CD8-positive, alpha-beta memory T cell (primary cell): ENCODE measurements at regions of chr10 and their contacts with region 1.

Region 1: DNA sequence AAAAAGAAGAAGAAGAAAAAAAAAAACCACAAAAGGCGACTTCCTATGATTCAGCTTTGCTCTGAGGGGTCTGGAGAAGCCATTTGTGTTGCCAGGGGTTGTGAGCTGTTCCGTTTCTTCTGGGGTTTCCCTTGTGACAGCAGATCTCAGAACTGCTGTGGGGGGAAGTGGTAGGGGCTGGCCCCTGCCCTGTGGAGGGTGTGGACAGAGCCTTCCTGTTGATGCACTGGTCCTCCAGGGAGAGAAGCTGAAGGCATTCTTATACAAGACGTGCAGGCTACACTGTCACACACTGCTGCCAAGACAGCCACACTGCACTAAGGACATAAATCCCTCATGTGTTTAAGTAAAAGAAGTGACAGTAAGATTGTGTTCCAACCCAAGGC is 17.3 kb upstream of the CSGALNACT2 start:
- DNase-seq: peak in 4 of 5 donors; percentile 14 to 71 (median 38)
- H3K4me3 ChIP-seq: peak overlapping the region; percentile 24
- H3K4me3 Mint-ChIP-seq: peak overlapping the region in 5 of 7 donors; percentile 45 to 75 (median 70)
- H3K27ac ChIP-seq: no peak overlapping the region
- H3K27ac Mint-ChIP-seq: peak overlapping the region in 7 of 8 donors; percentile 70 to 95 (median 90)
- H3K4me1 ChIP-seq: peaks cover 18% of the 10 kb centered on the region
- H3K4me1 Mint-ChIP-seq: peaks cover 23 to 26% (median 24%) of the 10 kb centered on the region in 3 donors
- H3K27me3 ChIP-seq: no peaks in the 10 kb centered on the region
- H3K27me3 Mint-ChIP-seq: peaks cover 0 to 2% of the 10 kb centered on the region in 2 donors

Region 2: DNA sequence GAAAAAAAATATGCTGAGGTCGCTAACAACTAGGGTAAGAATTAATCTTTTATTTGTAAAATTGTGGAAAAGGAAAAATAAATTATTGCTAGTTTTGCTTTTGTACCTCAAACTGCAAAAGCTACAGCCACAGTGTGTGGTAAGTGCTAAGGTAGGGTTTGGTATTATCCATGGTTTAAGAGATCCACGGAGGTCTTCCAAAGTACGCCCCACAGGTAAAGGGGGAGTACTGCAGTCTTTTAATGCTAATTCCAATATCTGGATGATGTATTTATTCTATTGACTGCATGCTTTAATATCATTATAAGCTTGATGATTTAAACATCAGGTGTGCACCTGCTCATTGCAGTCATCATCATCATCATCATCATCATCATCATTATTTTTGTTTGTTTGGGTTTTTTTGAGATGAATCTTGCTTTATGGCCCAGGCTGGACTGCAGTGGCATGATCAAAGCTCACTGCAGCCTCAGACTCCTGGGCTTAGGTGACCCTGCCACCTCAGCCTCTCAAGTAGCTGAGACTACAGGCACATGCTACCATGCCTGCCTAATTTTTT is 376.7 kb before region 1 on chr10:
- CTCF ChIA-PET with region 1: no interaction called
- POLR2A ChIA-PET with region 1: interaction called, 10 read pairs
- DNase-seq: no peak
- H3K4me3 ChIP-seq: no peak overlapping the region
- H3K4me3 Mint-ChIP-seq: no peak overlapping the region
- H3K27ac ChIP-seq: no peak overlapping the region
- H3K27ac Mint-ChIP-seq: no peak overlapping the region
- H3K4me1 ChIP-seq: no peaks in the 10 kb centered on the region
- H3K4me1 Mint-ChIP-seq: no peaks in the 10 kb centered on the region
- H3K27me3 ChIP-seq: no peaks in the 10 kb centered on the region
- H3K27me3 Mint-ChIP-seq: peaks cover 11 to 21% of the 10 kb centered on the region in 2 donors

Region 3: GRCh38 chr10:43138021-43138756 is 17.3 kb after region 1 on chr10 and contains the start of gene CSGALNACT2:
- CTCF ChIA-PET with region 1: interaction called, 4 read pairs
- POLR2A ChIA-PET with region 1: interaction called, 12 read pairs
- DNase-seq: peak; percentile 80 to 91 (median 89)
- H3K4me3 ChIP-seq: peak within 1 kb of the TSS; percentile 96
- H3K4me3 Mint-ChIP-seq: peak within 1 kb of the TSS; percentile 95 to 99 (median 99)
- H3K27ac ChIP-seq: peak within 1 kb of the TSS; percentile 92
- H3K27ac Mint-ChIP-seq: peak within 1 kb of the TSS; percentile 93 to 100 (median 98)
- H3K4me1 ChIP-seq: peaks cover 46% of the 10 kb centered on the region
- H3K4me1 Mint-ChIP-seq: peaks cover 41 to 60% (median 56%) of the 10 kb centered on the region in 3 donors
- H3K27me3 ChIP-seq: no peaks in the 10 kb centered on the region
- H3K27me3 Mint-ChIP-seq: peaks cover 0 to 4% of the 10 kb centered on the region in 2 donors
- total RNA-seq, gene CSGALNACT2: 21.0 to 21.7 TPM

Region 4: DNA sequence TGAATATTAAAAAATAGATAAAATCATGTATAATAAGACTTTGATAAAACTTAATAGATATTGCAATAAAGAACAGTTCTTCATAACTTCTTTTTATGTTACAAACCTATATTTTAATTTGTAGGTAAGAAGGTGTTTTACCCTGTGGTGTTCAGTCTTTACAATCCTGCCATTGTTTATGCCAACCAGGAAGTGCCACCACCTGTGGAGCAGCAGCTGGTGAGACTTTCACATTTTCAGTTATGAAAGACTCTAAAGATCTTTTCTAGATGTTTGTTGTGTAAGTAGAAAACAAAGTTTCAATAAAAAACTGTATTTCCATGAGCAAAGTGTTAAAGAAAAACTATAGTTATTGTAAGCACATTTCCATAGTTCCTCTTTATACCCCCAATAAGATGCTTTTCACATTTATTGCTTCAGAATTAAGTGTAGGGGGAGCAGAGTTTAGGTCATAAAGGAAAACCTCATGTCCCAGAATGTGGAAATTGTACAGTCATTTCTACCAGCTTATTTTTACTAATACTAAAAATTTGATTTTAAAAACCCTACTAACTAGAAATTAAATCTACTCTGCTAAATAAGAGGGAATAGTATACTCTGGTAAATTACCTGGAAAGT is 46.1 kb after region 1 on chr10:
- CTCF ChIA-PET with region 1: no interaction called
- POLR2A ChIA-PET with region 1: no interaction called
- DNase-seq: no peak
- H3K4me3 ChIP-seq: no peak overlapping the region
- H3K4me3 Mint-ChIP-seq: no peak overlapping the region
- H3K27ac ChIP-seq: no peak overlapping the region
- H3K27ac Mint-ChIP-seq: peak overlapping the region in 4 of 8 donors; percentile 17 to 60 (median 30)
- H3K4me1 ChIP-seq: peaks cover 6% of the 10 kb centered on the region
- H3K4me1 Mint-ChIP-seq: peaks cover 32 to 62% (median 47%) of the 10 kb centered on the region in 3 donors
- H3K27me3 ChIP-seq: no peaks in the 10 kb centered on the region
- H3K27me3 Mint-ChIP-seq: no peaks in the 10 kb centered on the region